OCI-LY7 (cell line): ENCODE measurements at regions of chr3 and their contacts with region 1.

Region 1: GRCh38 chr3:151259664-151260063 is 18.7 kb downstream of the P2RY14 start:
- DNase-seq: no peak
- H3K4me3 ChIP-seq: no peak overlapping the region
- H3K27ac ChIP-seq: no peak overlapping the region
- H3K4me1 ChIP-seq: no peaks in the 10 kb centered on the region
- CTCF ChIP-seq: no peak

Region 2: GRCh38 chr3:150627557-150627956 is 632.1 kb before region 1 on chr3:
- CTCF ChIA-PET with region 1: no interaction called
- POLR2A ChIA-PET with region 1: no interaction called
- intact Hi-C with region 1: no loop called
- DNase-seq: no peak
- H3K4me3 ChIP-seq: no peak overlapping the region
- H3K27ac ChIP-seq: no peak overlapping the region
- H3K4me1 ChIP-seq: no peaks in the 10 kb centered on the region
- CTCF ChIP-seq: no peak

Region 3: DNA sequence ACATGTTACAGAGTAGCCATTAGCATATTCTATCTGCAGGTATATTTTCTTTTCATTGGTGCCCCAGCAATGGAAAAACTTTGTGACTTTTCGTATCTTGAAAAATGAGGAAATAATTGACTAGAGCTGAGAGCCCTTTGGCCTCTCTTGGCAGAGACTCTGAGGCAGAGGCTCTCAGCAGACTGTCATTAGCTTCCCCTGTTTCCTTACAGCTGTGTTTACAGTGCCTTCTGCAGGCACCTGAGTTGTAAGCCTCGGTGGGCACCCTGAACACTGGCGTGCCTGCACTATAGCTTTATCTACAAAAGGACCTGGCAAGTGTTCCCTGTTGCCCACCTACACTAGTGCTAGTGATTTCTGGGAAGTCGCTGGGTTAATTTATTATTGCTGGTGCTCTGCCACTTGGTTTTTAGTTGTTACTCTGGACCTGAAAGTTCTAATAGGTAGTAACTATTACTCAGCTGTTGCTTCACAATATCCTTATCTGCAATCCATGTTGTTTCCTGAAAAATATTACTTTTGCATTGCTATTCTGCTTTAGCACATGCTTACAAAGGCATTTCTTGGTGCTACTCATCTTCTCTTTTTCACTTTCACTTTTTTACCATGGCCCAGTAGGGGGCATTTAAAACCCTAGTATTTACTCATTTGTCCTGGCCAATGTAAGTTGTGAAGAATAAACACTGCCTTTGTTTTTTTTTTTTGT is 48.8 kb before region 1 on chr3:
- CTCF ChIA-PET with region 1: no interaction called
- POLR2A ChIA-PET with region 1: interaction called, 10 read pairs
- intact Hi-C with region 1: no loop called
- DNase-seq: peak; percentile 7
- H3K4me3 ChIP-seq: no peak overlapping the region
- H3K27ac ChIP-seq: no peak overlapping the region
- H3K4me1 ChIP-seq: no peaks in the 10 kb centered on the region
- CTCF ChIP-seq: peak; percentile 50; the same call in 1 of the 2 replicates